ENCODE measurements at regions of chr9 and their contacts with region 1.

Region 1: GRCh38 chr9:129058965-129059795 is 21.7 kb upstream of the DOLPP1 start:
- DNase-seq: no peak
- H3K4me3 ChIP-seq: no peak overlapping the region
- H3K27ac ChIP-seq: no peak overlapping the region
- H3K4me1 ChIP-seq: no peaks in the 10 kb centered on the region
- H3K27me3 ChIP-seq: no peaks in the 10 kb centered on the region
- CTCF ChIP-seq: no peak
- POLR2A ChIP-seq: no peak

Region 2: DNA sequence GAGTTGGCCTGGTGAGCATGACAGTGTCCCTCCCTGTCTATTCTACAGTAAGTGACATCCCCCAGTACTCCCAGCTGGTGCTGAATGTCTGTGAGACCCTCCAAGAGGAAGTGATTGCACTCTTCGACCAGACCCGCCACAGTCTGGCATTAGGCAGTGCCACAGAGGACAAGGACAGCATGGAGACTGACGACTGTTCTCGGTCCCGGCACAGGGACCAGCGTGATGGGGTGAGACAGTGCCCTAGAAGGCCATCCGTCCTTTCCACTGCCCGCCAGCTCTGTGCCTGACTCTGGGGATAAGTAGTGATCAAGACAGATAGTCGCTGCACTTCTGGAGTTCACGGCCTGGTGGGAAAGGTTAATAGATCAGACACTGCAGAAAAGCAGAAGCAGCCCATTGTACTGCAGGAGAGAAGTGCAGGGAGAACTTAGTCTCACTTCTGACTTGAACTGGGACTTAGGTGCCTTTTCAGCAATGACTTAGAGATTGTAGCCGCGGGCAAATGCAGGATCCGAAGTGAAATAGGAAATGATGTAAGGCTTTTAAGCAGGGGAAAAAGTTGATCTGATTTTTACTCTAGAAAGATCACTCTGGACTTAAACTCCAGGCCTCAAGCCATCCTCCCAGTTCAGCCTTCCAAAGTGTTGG is 59.5 kb before region 1 on chr9:
- intact Hi-C with region 1: loop called (anchors 2 kb)
- DNase-seq: no peak
- H3K4me3 ChIP-seq: no peak overlapping the region
- H3K27ac ChIP-seq: no peak overlapping the region
- H3K4me1 ChIP-seq: no peaks in the 10 kb centered on the region
- H3K27me3 ChIP-seq: no peaks in the 10 kb centered on the region
- CTCF ChIP-seq: no peak
- POLR2A ChIP-seq: no peak

Measured in breast epithelium (tissue), 4 donors.